PC-3 (cell line): ENCODE measurements at regions of chr11 and their contacts with region 1.

Region 1: DNA sequence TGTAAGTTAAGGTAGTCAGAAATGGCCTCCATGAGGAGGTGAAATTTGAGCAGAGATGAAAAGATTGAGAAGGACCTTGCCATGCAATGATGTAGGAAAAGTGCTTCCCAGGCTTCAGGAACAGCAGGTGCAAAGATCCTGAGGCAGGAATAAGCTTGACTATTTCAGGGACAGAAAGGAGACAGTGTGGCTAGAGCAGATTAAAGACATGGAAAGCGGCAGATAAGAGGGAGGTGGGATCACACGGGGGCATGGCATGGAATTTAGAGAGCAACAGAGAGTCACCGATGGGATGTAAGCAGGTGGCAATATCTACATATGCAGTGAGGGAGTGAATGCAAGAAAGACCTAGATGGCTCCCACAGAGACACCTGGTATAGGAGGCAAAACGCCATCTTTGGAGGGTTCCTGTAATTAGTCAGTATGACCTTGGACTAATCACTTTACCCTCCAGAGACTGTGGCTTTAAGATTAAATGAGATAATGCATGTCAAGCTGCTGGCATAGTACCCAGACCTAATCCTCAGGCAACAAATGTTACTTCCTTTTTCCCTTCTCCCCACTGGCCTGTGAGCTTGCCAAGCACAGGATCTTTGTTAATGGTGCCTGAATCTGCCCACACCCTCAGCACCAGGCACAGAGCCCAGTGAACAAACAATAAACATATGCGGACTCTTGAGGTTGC is 24.6 kb upstream of the ACER3 start:
- DNase-seq: peak; percentile 94
- ATAC-seq: peak; percentile 87
- H3K4me3 ChIP-seq: no peak overlapping the region
- H3K27ac ChIP-seq: peak overlapping the region; percentile 52
- H3K4me1 ChIP-seq: peaks cover 48% of the 10 kb centered on the region
- H3K27me3 ChIP-seq: no peaks in the 10 kb centered on the region
- CTCF ChIP-seq: no peak

Region 2: GRCh38 chr11:76823481-76824078 is 12.5 kb before region 1 on chr11:
- CTCF ChIA-PET with region 1: interaction called, 3 read pairs
- POLR2A ChIA-PET with region 1: no interaction called
- intact Hi-C with region 1: loop called (anchors 1 kb)
- DNase-seq: peak; percentile 99
- ATAC-seq: peak; percentile 75
- H3K4me3 ChIP-seq: peak overlapping the region; percentile 38
- H3K27ac ChIP-seq: peak overlapping the region; percentile 96
- H3K4me1 ChIP-seq: peaks cover 37% of the 10 kb centered on the region
- H3K27me3 ChIP-seq: no peaks in the 10 kb centered on the region
- CTCF ChIP-seq: no peak

Region 3: DNA sequence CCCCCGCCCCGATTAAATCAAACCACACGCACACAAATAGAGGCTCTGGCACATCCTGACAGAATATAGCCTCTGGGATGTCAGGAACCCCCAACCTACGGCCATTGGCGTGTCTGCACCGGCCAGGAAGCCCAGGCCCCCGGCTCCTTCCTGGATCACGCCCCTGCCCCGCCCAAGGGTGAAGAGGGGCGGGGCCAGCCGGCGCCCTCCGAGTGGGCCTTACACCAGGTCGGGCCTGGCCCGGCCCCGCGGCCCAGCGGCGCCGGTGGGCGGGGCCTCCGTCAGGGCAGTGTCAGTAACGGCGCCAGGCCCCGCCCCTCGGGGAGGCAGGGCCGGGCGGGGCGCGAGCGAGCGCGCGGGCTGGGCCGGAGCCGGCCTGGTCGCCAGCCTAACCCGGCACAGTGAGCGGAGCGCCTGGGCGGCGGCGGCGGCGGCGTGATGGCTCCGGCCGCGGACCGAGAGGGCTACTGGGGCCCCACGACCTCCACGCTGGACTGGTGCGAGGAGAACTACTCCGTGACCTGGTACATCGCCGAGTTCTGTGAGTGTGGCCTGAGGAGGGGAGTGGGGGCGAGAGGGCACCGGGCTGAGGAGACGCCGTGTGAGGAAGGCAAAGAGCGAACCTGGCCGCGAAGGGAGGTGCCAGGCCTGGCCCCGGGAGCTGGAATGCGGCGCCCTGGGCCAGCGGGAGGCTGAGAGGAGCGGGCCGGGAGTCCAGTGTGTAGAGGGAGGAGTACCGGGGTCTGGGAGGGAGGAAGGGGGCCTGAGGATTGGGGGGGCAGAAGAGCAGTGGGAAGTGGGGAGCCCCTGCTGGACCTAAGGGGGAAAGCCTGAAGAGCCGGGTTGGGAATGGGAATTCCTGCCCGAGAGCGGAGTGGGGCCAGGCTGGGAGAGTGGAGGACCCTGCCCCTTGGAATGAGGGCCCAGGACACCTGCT is 24.7 kb after region 1 on chr11 and contains the start of gene ACER3:
- CTCF ChIA-PET with region 1: no interaction called
- POLR2A ChIA-PET with region 1: no interaction called
- intact Hi-C with region 1: loop called (anchors 2 kb)
- DNase-seq: peak; percentile 98
- ATAC-seq: peak; percentile 95
- H3K4me3 ChIP-seq: peak within 1 kb of the TSS; percentile 93
- H3K27ac ChIP-seq: peak within 1 kb of the TSS; percentile 22; the same call in 1 of the 2 replicates
- H3K4me1 ChIP-seq: peaks cover 16% of the 10 kb centered on the region
- H3K27me3 ChIP-seq: no peaks in the 10 kb centered on the region
- CTCF ChIP-seq: peak; percentile 24; the same call in 1 of the 2 replicates
- total RNA-seq, gene ACER3: 17.3 and 18.5 TPM in 2 replicates